ENCODE measurements at regions of chr17 and their contacts with region 1.

Region 1: GRCh38 chr17:43778337-43779144 is at the start of gene DUSP3:
- DNase-seq: peak; percentile 98
- H3K4me3 ChIP-seq: peak within 1 kb of the TSS; percentile 74 to 100 (median 82)
- H3K27ac ChIP-seq: peak within 1 kb of the TSS; percentile 97 to 100 (median 100)
- H3K4me1 ChIP-seq: peaks cover 0 to 40% (median 32%) of the 10 kb centered on the region in 4 donors
- H3K27me3 ChIP-seq: peaks cover 0 to 6% (median 0%) of the 10 kb centered on the region in 3 donors
- CTCF ChIP-seq: no peak
- EP300 ChIP-seq: peak in 2 of 4 donors; percentile 66 to 89
- POLR2A ChIP-seq: peak; percentile 54 to 69
- total RNA-seq, gene DUSP3: 70.4 to 140 (median 120) TPM

Region 2: DNA sequence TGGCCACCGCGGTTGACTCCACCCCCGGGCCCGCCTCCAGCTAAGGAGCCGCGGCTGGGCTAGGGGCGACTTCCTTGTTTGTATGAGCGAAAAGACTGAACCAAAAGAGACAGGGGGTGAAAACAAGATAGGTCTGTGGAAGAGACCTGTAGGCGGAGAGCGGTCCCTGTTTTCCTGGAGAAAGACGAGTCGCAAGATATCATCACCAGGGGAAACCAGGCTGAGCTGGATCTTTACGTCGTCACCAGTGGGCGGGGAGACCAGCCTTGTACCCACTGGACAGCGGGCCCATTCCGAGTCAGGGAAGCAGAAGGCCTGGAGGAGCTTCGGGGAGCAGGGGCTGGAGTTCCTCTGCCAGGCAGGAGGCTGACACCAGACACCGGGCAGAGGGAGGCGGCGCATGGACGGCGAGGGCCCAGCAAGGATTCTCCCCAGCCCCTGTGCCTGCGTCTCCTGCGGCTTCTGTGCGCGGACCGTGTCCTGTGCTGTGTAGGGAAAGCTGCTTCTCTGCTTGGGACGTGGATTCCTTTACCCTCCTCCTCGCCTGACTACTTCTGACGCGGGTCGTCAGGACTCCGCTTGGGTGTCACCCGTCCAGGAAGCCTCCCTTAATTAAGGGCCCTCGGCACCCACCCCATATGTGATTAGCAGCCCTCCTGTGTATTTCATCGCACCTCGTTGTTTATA is 390.0 kb before region 1 on chr17:
- intact Hi-C with region 1: loop called (anchors 10 kb)
- DNase-seq: peak; percentile 97
- H3K4me3 ChIP-seq: peak overlapping the region; percentile 57 to 65 (median 64)
- H3K27ac ChIP-seq: peak overlapping the region; percentile 98 to 100 (median 99)
- H3K4me1 ChIP-seq: peaks cover 0 to 21% (median 12%) of the 10 kb centered on the region in 4 donors
- H3K27me3 ChIP-seq: no peaks in the 10 kb centered on the region
- CTCF ChIP-seq: no peak
- EP300 ChIP-seq: no peak
- POLR2A ChIP-seq: peak; percentile 94 to 95

Region 3: GRCh38 chr17:43734376-43734775 is 44.2 kb before region 1 on chr17:
- intact Hi-C with region 1: no loop called
- DNase-seq: no peak
- H3K4me3 ChIP-seq: no peak overlapping the region
- H3K27ac ChIP-seq: no peak overlapping the region
- H3K4me1 ChIP-seq: no peaks in the 10 kb centered on the region
- H3K27me3 ChIP-seq: no peaks in the 10 kb centered on the region
- CTCF ChIP-seq: no peak
- EP300 ChIP-seq: no peak
- POLR2A ChIP-seq: no peak

Region 4: DNA sequence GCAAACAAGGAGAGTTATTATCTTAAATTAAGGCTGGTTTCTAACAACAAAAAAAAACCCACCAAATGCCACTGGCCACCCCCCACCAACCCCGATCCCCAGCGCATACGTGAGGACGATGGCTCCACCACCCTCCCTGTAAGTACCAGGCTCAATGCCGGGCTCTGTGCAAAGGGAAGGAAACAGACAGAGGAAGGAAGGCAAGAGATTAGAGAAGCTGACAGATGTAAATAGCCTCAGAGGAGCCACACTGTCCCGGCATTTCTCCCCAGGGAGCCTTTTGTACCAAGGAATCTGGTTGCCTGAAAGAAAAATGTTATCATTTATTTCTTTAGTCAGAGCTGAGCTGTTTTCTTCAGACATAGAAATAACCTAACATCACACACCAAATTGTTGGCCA is 33.0 kb before region 1 on chr17:
- intact Hi-C with region 1: no loop called
- DNase-seq: no peak
- H3K4me3 ChIP-seq: no peak overlapping the region
- H3K27ac ChIP-seq: no peak overlapping the region
- H3K4me1 ChIP-seq: no peaks in the 10 kb centered on the region
- H3K27me3 ChIP-seq: peaks cover 0 to 20% (median 0%) of the 10 kb centered on the region in 3 donors
- CTCF ChIP-seq: no peak
- EP300 ChIP-seq: no peak
- POLR2A ChIP-seq: no peak

Region 5: GRCh38 chr17:43832976-43833829 is 54.7 kb after region 1 on chr17 and contains the start of gene MPP3:
- intact Hi-C with region 1: loop called (anchors 5 kb)
- DNase-seq: peak; percentile 78
- H3K4me3 ChIP-seq: peak within 1 kb of the TSS; percentile 54 to 90 (median 71)
- H3K27ac ChIP-seq: peak within 1 kb of the TSS; percentile 68 to 76 (median 72)
- H3K4me1 ChIP-seq: peaks cover 0 to 23% (median 18%) of the 10 kb centered on the region in 4 donors
- H3K27me3 ChIP-seq: no peaks in the 10 kb centered on the region
- CTCF ChIP-seq: no peak
- EP300 ChIP-seq: no peak
- POLR2A ChIP-seq: no peak
- total RNA-seq, gene MPP3: 5.0 to 10.5 (median 6.0) TPM

Region 6: GRCh38 chr17:43846221-43846712 is 67.7 kb after region 1 on chr17:
- intact Hi-C with region 1: loop called (anchors 5 kb)
- DNase-seq: peak; percentile 94
- H3K4me3 ChIP-seq: no peak overlapping the region
- H3K27ac ChIP-seq: peak overlapping the region in 3 of 4 donors; percentile 5 to 40 (median 32)
- H3K4me1 ChIP-seq: peaks cover 0 to 16% (median 9%) of the 10 kb centered on the region in 4 donors
- H3K27me3 ChIP-seq: no peaks in the 10 kb centered on the region
- CTCF ChIP-seq: peak; percentile 95 to 98 (median 96)
- EP300 ChIP-seq: no peak
- POLR2A ChIP-seq: no peak

Measured in sigmoid colon (tissue), 7 donors.